ENCODE measurements at regions of chr13 and their contacts with region 1.

Region 1: GRCh38 chr13:73273741-73274140 is 214.9 kb downstream of the KLF5 start:
- DNase-seq: no peak
- H3K4me3 Mint-ChIP-seq: no peak overlapping the region
- H3K27ac Mint-ChIP-seq: no peak overlapping the region
- H3K4me1 Mint-ChIP-seq: peaks cover 49% of the 10 kb centered on the region
- H3K27me3 Mint-ChIP-seq: no peaks in the 10 kb centered on the region

Region 2: DNA sequence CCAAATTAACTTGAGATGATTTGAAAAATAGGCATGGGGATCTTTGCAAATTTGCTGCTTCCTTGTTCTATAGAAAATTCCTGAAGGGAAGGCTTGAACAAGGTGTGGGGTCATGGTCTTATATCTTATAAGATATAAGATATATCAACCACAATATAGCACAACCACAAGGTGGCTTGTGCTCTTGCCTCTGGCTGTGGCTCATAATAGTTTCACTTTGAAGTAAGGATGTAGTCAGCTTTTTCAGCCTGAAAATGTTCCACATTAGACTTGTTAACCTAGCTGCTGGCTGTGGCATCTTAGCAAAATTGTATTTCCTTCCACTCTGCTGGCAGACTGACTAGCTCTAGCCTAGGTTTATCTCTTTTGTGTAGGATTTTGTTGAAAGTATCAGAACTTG is 45.2 kb before region 1 on chr13:
- intact Hi-C with region 1: loop called (anchors 2 kb)
- DNase-seq: peak; percentile 16
- H3K4me3 Mint-ChIP-seq: no peak overlapping the region
- H3K27ac Mint-ChIP-seq: no peak overlapping the region
- H3K4me1 Mint-ChIP-seq: peaks cover 38% of the 10 kb centered on the region
- H3K27me3 Mint-ChIP-seq: peaks cover 16% of the 10 kb centered on the region

Region 3: DNA sequence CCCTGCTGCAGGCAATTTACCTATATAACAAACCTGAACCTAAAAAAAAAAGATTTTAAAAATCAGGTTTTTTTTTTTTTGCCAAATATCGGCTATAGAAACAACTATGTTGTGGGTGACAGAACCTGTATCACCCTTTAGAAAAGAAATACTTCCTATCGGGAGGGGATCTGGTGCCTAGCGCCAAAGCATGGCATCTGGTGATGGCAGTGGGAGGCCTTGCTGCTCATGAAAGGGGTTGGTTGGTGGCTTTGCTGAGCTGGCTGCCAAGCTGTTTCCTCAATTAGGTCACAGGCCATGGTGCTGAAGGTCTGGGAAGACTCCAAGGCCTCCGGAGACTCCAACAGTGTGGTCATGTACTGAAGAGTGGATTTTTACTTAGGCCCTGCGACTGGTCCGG is 113.6 kb after region 1 on chr13:
- intact Hi-C with region 1: no loop called
- DNase-seq: no peak
- H3K4me3 Mint-ChIP-seq: no peak overlapping the region
- H3K27ac Mint-ChIP-seq: no peak overlapping the region
- H3K4me1 Mint-ChIP-seq: no peaks in the 10 kb centered on the region
- H3K27me3 Mint-ChIP-seq: no peaks in the 10 kb centered on the region

Region 4: GRCh38 chr13:73508841-73509240 is 235.1 kb after region 1 on chr13:
- intact Hi-C with region 1: no loop called
- DNase-seq: no peak
- H3K4me3 Mint-ChIP-seq: no peak overlapping the region
- H3K27ac Mint-ChIP-seq: no peak overlapping the region
- H3K4me1 Mint-ChIP-seq: no peaks in the 10 kb centered on the region
- H3K27me3 Mint-ChIP-seq: peaks cover 11% of the 10 kb centered on the region

Region 5: DNA sequence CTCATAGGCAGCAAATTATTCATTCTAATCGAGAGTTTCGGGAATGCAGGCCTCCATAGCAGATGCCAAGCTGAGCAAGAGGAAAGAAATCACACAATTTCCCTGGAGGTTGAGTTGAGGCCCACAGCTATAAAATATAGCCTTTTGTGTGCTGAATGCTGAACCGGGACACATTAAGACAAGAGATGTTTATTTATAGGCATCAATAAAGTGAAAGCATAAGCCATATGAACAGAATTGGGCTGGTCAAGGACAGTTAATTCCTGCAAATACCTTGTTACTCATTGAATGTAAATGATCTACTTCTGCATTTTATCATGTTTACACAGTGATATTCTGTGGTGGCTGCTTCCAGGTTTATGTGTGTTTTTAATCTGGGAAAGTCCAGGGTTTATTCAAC is 398.8 kb after region 1 on chr13:
- intact Hi-C with region 1: no loop called
- DNase-seq: no peak
- H3K4me3 Mint-ChIP-seq: no peak overlapping the region
- H3K27ac Mint-ChIP-seq: no peak overlapping the region
- H3K4me1 Mint-ChIP-seq: no peaks in the 10 kb centered on the region
- H3K27me3 Mint-ChIP-seq: peaks cover 15% of the 10 kb centered on the region

Measured in activated T-helper 2 cell treated with anti-CD3 and anti-CD28 coated beads, Interferon-gamma antibody, Interleukin-2, Interleukin-4, amounts not matched to agents 10 μg/mL and 5 μg/mL and 100 μg/mL, durations not matched to agents 14 hours and 24 hours and 36 hours (primary cell).